ENCODE measurements at regions of chr15 and their contacts with region 1.

Region 1: GRCh38 chr15:29103824-29104565 is 165.6 kb downstream of the NSMCE3 start:
- DNase-seq: peak; percentile 66 to 92
- H3K4me3 ChIP-seq: peak overlapping the region; percentile 20 to 59 (median 27); a peak in 6 of 8 replicates
- H3K27ac ChIP-seq: no peak overlapping the region
- H3K4me1 ChIP-seq: peaks cover 0 to 17% (median 6%) of the 10 kb centered on the region in 4 experiments; a peak in 5 of 7 replicates
- H3K27me3 ChIP-seq: no peaks in the 10 kb centered on the region
- CTCF ChIP-seq: peak in 2 of 3 experiments; percentile 88 to 94; a peak in 3 of 4 replicates
- EP300 ChIP-seq: peak in 1 of 2 experiments; percentile 19; a peak in 1 of 3 replicates
- POLR2A ChIP-seq: no peak
- RAD21 ChIP-seq: peak; percentile 81 to 91

Region 2: DNA sequence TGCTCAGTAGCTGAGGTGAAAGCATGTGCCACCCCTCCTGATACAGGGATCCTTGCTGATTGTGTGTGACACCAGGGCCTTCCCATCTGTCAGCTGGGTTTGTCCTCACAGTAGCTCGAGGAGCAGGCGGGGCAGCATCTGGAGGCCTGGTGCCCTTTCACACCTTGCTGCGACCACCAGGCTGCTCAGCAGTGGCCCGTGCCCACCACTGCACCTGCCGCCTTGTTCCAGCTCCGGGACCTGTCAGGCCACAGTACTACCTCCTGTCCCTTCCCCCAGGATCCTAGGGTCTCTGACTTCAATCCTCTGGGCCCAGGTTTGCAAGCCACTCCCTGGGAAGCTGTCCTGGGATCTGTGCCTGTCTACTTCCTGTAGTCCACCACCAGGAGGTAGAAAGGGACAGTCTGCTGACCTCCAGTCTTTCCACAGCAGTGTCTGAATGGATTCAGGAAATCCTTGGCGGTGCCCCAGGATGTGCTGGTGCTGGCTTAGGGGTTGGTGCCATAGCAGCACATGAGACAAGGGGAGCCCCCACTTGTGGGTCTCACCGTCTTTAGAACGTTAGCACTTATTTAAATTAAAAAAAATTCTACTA is 190.7 kb before region 1 on chr15:
- CTCF ChIA-PET with region 1: interaction called, 11 read pairs
- POLR2A ChIA-PET with region 1: no interaction called
- DNase-seq: no peak
- H3K4me3 ChIP-seq: no peak overlapping the region
- H3K27ac ChIP-seq: no peak overlapping the region
- H3K4me1 ChIP-seq: peaks cover 8 to 23% (median 13%) of the 10 kb centered on the region in 4 experiments
- H3K27me3 ChIP-seq: no peaks in the 10 kb centered on the region
- CTCF ChIP-seq: peak in 2 of 3 experiments; percentile 25 to 32; a peak in 2 of 4 replicates
- EP300 ChIP-seq: no peak
- POLR2A ChIP-seq: no peak
- RAD21 ChIP-seq: peak in 1 of 2 experiments; percentile 35; a peak in 2 of 4 replicates

Region 3: DNA sequence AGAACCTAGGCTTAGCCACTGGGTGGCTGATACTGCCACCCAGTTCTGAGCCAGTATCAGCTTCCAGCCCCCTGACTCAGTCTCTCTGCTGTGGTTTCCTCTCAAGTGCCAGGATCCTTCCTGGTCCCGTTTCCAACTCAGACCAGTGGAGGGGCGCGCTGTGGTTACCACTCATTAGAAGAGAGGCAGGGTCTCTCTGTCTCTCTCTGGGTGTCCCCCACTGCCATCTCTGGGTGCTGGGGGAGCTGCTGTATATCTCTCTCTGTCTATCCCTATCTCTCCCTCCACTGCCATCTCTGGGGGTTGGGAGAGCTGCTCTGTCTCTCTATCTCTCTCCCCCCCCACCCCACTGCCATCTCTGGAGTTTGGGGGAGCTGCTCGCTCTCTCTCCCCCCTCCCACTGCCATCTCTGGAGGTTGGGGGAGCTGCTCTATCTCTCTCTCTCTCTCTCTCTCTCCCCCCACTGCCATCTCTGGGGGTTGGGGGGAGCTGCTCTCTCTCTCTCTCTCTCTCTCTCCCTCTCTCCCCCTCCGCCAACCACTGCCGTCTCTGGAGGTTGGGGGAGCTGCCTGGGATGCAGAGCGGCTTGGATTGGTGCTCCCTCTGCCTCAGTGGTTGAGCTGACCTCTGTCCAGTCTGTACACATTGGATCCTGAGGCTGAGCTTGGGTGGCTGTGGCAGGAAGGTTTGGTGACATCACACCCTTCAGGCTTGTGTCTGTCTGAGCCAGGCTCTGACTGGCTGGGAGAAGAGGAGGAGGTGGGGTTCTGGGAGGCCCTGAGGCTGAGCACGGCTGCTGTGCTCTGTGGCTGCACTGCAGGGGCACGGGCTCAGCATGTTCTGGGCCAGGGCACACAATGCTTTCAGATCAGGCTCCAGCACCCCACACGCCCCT is 119.3 kb before region 1 on chr15:
- CTCF ChIA-PET with region 1: interaction called, 15 read pairs
- POLR2A ChIA-PET with region 1: no interaction called
- DNase-seq: no peak
- H3K4me3 ChIP-seq: no peak overlapping the region
- H3K27ac ChIP-seq: no peak overlapping the region; the same call in 1 of the 2 replicates
- H3K4me1 ChIP-seq: peaks cover 2 to 6% (median 5%) of the 10 kb centered on the region in 4 experiments; a peak in 6 of 7 replicates
- H3K27me3 ChIP-seq: no peaks in the 10 kb centered on the region; a peak in 1 of 7 replicates
- CTCF ChIP-seq: no peak
- EP300 ChIP-seq: no peak
- POLR2A ChIP-seq: no peak
- RAD21 ChIP-seq: no peak

Region 4: DNA sequence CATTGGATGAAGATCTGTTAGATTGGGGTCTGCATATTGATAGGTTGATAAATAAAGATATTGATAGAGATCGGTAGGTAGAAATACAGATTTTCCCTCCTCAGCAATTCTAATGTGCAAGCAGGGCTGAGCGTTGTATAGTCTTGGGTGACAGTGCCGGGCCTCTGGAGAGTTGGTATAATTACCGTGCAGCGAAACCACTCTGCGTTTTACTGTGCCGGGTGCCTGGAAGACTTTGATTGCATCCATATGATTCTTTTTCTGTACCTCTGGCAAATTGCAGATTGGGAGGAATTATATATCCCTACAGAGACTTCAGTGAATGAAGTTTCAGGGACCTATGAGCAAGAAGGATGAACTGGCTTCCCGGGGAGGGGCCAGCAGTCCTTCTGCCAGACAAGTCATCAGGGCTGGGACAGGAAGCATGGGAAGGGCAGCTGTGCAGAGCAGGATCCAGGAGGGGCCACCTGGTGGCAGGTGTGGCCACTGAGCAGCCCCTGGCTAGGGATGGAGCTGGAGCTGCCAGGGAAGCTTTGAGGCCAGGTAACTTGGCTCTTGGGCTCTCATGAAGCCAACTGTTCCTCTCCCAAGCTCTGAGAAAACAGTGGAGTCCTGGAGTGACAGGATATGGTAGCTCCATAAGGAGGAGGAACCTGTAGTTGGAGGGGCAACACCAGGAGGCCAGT is 85.7 kb before region 1 on chr15:
- CTCF ChIA-PET with region 1: interaction called, 14 read pairs
- POLR2A ChIA-PET with region 1: no interaction called
- DNase-seq: peak; percentile 27 to 67
- H3K4me3 ChIP-seq: no peak overlapping the region
- H3K27ac ChIP-seq: no peak overlapping the region
- H3K4me1 ChIP-seq: peaks cover 3 to 7% (median 5%) of the 10 kb centered on the region in 4 experiments; a peak in 6 of 7 replicates
- H3K27me3 ChIP-seq: no peaks in the 10 kb centered on the region
- CTCF ChIP-seq: peak; percentile 64 to 78 (median 77)
- EP300 ChIP-seq: no peak
- POLR2A ChIP-seq: no peak
- RAD21 ChIP-seq: peak; percentile 56 to 74; a peak in 3 of 4 replicates

Region 5: GRCh38 chr15:29070449-29071231 is 33.4 kb before region 1 on chr15:
- CTCF ChIA-PET with region 1: interaction called, 11 read pairs
- POLR2A ChIA-PET with region 1: no interaction called
- DNase-seq: no peak
- H3K4me3 ChIP-seq: no peak overlapping the region
- H3K27ac ChIP-seq: no peak overlapping the region
- H3K4me1 ChIP-seq: no peaks in the 10 kb centered on the region
- H3K27me3 ChIP-seq: no peaks in the 10 kb centered on the region
- CTCF ChIP-seq: no peak
- EP300 ChIP-seq: no peak
- POLR2A ChIP-seq: no peak
- RAD21 ChIP-seq: no peak

Region 6: DNA sequence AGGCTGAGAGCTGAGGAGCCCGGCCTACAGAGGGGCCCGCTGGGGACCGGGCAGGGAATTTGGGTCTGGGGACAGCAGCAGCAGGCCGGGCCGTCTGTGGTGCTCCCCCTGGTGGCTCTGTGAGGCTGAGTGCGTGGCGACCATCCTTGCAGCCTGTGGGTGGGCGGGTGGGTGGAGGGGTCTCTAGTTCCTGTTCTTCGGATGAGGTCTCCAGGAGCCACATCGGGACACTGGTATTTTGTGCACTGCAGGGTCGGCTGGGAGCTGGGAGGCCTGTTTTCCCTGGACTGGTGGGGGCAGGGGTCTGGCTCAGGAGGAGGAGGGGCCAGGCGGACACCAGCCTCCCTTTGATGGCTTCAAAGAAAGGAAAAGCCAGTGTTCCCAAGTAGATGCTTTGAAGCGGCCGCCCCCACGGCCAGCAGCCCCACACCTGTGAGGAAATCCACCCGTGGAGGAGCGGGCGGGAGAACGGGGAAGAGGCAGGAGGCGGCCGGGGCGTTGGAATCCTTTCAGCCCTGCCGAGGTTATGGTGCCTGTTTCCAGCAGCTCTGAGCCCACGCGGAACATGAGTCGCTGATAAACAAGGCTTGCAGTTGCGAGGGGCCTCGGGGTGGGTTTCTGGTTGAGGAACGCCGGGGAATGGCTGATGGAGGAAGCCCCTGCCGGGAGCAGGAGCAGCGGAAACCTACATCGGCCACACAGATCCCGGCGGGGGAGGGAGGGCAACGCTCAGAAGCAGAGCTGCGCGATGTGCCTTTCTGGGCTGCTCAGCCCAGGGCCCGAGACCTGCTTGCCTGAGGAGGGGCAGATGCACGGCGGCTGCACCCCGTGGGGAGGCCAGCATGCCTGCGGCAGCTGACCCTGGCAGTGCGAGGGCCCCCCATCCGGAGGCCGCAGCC is 11.3 kb after region 1 on chr15:
- CTCF ChIA-PET with region 1: interaction called, 82 read pairs
- POLR2A ChIA-PET with region 1: interaction called, 6 read pairs
- DNase-seq: peak in 1 of 2 experiments; percentile 79
- H3K4me3 ChIP-seq: peak overlapping the region; percentile 34 to 69 (median 48)
- H3K27ac ChIP-seq: no peak overlapping the region
- H3K4me1 ChIP-seq: peaks cover 0 to 22% (median 15%) of the 10 kb centered on the region in 4 experiments; a peak in 5 of 7 replicates
- H3K27me3 ChIP-seq: no peaks in the 10 kb centered on the region
- CTCF ChIP-seq: peak in 2 of 3 experiments; percentile 51 to 60; a peak in 3 of 4 replicates
- EP300 ChIP-seq: no peak
- POLR2A ChIP-seq: no peak
- RAD21 ChIP-seq: peak; percentile 29 to 50; a peak in 3 of 4 replicates

Region 7: DNA sequence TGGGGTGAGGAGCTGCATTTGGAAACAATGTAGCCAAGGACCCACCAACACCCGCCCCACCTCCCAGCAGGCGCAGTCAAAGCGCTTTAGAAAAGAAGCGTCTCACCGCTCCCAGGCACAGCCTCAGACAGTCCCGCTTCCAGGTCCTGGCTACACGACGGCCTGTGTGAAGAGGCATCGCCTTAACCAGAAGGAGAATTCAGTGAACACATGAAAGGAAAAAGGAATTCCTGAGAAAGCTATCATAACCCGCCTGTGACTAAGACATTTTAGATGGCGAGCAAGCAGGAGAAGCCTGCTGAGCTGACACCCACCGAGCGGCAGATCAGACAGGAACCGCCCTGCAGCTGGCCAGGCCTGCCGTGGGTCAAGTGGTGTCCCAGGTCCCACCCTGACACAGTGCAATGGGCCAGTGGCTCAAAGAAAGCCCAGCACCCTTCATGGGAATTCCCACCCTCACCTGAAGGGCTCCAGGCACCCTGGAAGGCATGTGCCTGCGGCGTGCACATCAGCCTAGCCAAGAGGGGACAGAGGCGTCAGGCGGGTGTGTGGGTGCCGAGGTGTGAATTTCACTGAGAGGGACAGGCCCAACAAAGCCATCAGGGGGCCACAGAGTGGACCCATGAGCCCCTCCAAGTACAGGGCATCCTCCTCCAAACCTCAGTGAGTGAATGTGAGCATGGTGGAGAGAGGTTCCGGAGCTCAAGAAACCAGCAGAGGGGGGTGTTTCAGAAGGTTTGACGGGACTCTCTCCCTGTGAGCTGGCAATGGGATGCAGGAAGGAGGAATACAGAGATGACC is 20.8 kb after region 1 on chr15:
- CTCF ChIA-PET with region 1: interaction called, 27 read pairs
- POLR2A ChIA-PET with region 1: interaction called, 3 read pairs
- DNase-seq: no peak
- H3K4me3 ChIP-seq: no peak overlapping the region
- H3K27ac ChIP-seq: no peak overlapping the region
- H3K4me1 ChIP-seq: peaks cover 0 to 2% (median 0%) of the 10 kb centered on the region in 4 experiments; a peak in 4 of 7 replicates
- H3K27me3 ChIP-seq: no peaks in the 10 kb centered on the region
- CTCF ChIP-seq: peak in 2 of 3 experiments; percentile 26 to 37; a peak in 2 of 4 replicates
- EP300 ChIP-seq: no peak
- POLR2A ChIP-seq: no peak
- RAD21 ChIP-seq: peak; percentile 18 to 61; a peak in 3 of 4 replicates

Region 8: GRCh38 chr15:29480278-29480677 is 376.3 kb after region 1 on chr15:
- CTCF ChIA-PET with region 1: no interaction called
- POLR2A ChIA-PET with region 1: no interaction called
- DNase-seq: no peak
- H3K4me3 ChIP-seq: no peak overlapping the region
- H3K27ac ChIP-seq: no peak overlapping the region
- H3K4me1 ChIP-seq: peaks cover 2 to 8% (median 3%) of the 10 kb centered on the region in 4 experiments; a peak in 6 of 7 replicates
- H3K27me3 ChIP-seq: no peaks in the 10 kb centered on the region
- CTCF ChIP-seq: no peak
- EP300 ChIP-seq: no peak
- POLR2A ChIP-seq: no peak
- RAD21 ChIP-seq: no peak

Measured in H1 (cell line).